ENCODE measurements at regions of chr10 and their contacts with region 1.

Region 1: GRCh38 chr10:65544756-65545155 is 1381.1 kb upstream of the LRRTM3 start:
- DNase-seq: no peak
- CTCF ChIP-seq: no peak

Region 2: DNA sequence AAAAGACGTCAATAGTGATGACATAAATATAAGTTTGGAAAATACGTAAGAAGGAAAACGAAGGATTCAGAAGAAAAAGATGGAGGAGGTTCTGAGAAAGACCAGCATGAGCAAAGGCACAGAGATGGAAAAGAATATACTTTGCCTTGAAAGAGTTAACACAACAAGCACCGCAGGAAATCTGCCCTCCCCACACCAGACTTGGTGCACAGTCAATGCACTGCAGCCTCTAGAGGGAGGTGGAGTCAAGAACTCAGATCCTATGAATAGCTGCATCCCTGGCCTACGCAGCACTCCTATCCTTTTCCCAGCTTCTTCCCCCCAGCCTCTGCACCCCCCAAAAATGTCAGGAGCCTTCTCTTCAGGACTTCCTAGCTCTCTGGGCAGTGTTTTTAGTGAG is 10.4 kb after region 1 on chr10:
- CTCF ChIA-PET with region 1: interaction called, 17 read pairs
- POLR2A ChIA-PET with region 1: no interaction called
- DNase-seq: no peak
- CTCF ChIP-seq: no peak